Heart left ventricle (tissue), 16 donors: ENCODE measurements at regions of chr4 and their contacts with region 1.

Region 1: DNA sequence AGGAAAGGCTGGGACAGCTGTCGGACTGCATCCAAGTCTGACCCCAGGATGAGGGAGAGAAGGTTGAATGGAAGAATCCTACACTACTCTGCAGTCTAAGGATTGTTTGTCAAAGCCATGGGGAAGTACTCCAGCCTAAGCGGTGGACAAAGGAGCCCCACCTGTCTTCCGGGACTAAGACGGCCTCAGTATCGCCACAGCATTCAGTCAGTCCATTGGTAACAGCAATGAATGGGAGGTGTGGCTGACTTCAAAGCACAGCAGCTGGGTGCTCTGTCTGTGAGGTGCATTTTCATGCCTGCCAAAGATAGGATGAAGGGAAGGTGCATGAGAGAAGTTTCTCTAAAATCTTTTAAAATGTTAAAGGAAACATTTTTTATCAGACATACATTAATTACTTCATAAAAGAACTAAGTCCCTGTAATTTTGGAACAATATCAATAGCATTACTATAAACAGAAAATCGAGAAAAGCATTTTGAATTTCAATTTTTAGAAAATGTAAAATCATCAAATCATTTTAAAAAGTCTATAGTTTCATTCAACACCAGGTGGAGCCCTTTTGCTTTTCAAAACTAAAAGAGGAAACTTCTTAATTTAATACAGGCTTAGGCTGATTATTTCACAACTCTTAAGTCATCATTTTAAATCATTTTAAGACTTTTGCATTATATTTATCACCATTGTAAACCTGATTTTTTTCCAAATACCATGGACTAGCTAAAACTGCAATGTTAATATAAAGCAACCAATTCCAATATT is 27.6 kb upstream of the INTU start:
- DNase-seq: no peak
- ATAC-seq: no peak
- H3K4me3 ChIP-seq: no peak overlapping the region
- H3K27ac ChIP-seq: no peak overlapping the region
- H3K4me1 ChIP-seq: no peaks in the 10 kb centered on the region
- H3K27me3 ChIP-seq: peaks cover 0 to 10% (median 0%) of the 10 kb centered on the region in 9 donors
- CTCF ChIP-seq: peak; percentile 32 to 70 (median 60)
- POLR2A ChIP-seq: no peak

Region 2: GRCh38 chr4:127505203-127505602 is 99.9 kb before region 1 on chr4:
- intact Hi-C with region 1: no loop called
- DNase-seq: peak in 3 of 5 donors; percentile 23 to 38 (median 28)
- ATAC-seq: peak in 2 of 4 donors; percentile 22 to 33
- H3K4me3 ChIP-seq: no peak overlapping the region
- H3K27ac ChIP-seq: no peak overlapping the region
- H3K4me1 ChIP-seq: peaks cover 0 to 32% (median 13%) of the 10 kb centered on the region in 12 donors
- H3K27me3 ChIP-seq: no peaks in the 10 kb centered on the region
- CTCF ChIP-seq: no peak
- POLR2A ChIP-seq: no peak

Region 3: DNA sequence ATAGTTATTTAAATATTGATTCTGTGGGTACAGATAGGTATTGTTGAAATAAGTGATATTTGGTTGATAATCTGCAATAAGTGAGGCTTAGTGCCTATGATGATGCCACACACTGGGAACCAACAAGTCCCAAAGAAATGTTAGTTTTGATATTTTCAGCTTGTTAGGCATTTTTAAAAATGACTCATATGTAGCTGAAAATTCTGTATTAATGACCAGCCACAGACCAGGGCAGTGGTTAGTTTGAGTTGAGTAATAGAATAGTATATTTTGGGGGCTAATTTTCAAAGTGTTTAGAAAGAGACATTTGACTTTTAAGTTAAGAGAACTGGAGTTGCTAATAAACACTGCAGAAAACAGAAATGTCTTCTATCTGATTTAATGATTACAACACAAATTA is 37.0 kb after region 1 on chr4:
- intact Hi-C with region 1: no loop called
- DNase-seq: no peak
- ATAC-seq: no peak
- H3K4me3 ChIP-seq: peak overlapping the region in 3 of 12 donors; percentile 2 to 38 (median 37)
- H3K27ac ChIP-seq: no peak overlapping the region
- H3K4me1 ChIP-seq: peaks cover 0 to 16% (median 0%) of the 10 kb centered on the region in 12 donors
- H3K27me3 ChIP-seq: no peaks in the 10 kb centered on the region
- CTCF ChIP-seq: no peak
- POLR2A ChIP-seq: no peak

Region 4: DNA sequence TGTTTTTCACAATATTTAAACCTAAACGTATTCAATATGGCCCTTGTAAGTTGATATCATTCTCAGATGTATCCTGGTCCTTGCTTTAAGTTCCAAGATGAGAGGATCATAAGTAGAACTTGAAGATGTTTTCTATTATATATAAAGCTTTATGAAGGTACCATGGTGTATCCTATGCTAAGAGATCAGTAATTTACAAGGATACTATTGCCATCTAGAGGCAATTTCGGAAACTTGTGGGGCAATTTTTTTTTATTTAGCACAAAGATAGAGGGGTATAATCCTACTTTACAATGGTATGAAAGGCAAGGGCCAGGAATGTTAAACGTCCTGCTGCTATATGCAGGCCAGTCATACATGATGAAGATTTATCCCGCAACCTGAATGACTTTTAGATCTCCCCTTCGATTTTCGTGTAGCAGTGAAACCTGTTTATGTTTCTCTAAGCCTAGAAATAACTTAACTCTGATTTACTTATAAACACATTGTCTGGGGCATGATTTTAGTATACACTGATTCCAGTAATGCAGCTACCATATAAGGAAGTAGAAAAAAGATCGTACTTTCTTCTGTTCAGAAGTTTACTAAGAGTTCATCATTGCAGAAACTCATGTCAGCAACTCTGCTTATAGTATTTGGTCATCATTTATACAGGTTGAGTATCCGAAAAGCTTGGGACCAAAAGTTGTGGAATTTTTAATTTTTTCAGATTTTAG is 127.6 kb after region 1 on chr4:
- intact Hi-C with region 1: loop called in 9 of 10 experiments (anchors 1 to 5 kb)
- DNase-seq: no peak
- ATAC-seq: peak in 1 of 4 donors; percentile 33
- H3K4me3 ChIP-seq: no peak overlapping the region
- H3K27ac ChIP-seq: no peak overlapping the region
- H3K4me1 ChIP-seq: no peaks in the 10 kb centered on the region
- H3K27me3 ChIP-seq: peaks cover 0 to 5% (median 0%) of the 10 kb centered on the region in 9 donors
- CTCF ChIP-seq: peak; percentile 26 to 71 (median 52)
- POLR2A ChIP-seq: no peak